CD14-positive monocyte (primary cell): ENCODE measurements at regions of chr2 and their contacts with region 1.

Region 1: DNA sequence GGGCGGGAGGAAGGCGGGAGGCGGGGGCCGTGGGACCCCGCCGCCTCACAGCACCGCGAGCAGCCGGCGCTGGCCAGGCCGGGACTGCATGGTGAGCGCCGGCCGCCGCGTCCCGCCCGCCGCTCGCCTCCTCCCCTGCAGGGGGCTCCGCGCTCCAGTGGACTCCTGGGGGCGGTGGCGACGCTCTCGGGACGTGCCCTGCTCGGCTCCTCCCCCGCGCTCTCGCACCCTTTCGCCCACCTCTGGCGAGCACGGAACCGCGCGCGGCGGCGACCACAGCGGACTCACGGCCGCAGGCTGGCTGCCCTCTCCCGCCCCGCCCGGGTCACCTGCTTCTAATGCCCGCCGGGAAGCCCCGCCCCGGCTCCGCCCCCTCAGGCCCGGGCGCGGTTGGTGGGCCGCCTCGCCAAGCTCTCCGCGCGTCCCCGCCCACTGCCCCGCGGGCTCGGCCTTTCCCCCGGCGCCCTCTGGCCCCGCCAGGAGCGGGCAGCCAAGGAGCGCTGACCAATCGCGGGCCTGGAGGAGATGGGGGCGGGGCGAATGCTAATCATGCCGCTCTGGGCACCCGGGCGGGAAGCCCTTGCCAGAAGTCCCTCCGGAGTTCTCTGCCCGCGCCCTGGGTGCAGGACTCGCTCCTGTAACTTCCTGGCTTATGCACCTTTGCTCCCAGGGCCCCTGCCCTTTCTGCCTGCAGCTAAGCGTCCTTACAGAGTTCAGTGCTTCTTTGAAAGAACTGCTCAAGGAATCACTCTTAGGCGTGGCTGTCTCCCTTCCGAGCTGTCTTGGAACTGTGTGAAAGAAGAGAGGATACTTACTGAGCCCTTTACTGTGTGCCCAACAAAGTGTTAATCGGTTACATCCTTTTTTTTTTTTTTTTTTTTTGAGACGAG is at the start of gene FZD5:
- DNase-seq: peak; percentile 94 to 97 (median 95)
- H3K4me3 ChIP-seq: peak within 1 kb of the TSS; percentile 50 to 85 (median 79)
- H3K4me3 Mint-ChIP-seq: peak within 1 kb of the TSS; percentile 91 to 96
- H3K27ac ChIP-seq: peak within 1 kb of the TSS; percentile 37 to 62
- H3K27ac Mint-ChIP-seq: peak within 1 kb of the TSS; percentile 69 to 91 (median 84)
- H3K4me1 ChIP-seq: peaks cover 45% of the 10 kb centered on the region in 2 donors
- H3K4me1 Mint-ChIP-seq: peaks cover 47% of the 10 kb centered on the region
- H3K27me3 ChIP-seq: peaks cover 0 to 12% of the 10 kb centered on the region in 2 donors
- H3K27me3 Mint-ChIP-seq: peaks cover 7 to 27% (median 26%) of the 10 kb centered on the region in 3 donors
- CTCF ChIP-seq: peak; percentile 73
- polyA plus RNA-seq, gene FZD5: 0.32 to 0.55 (median 0.48) TPM

Region 2: GRCh38 chr2:207694811-207695281 is 75.0 kb before region 1 on chr2:
- intact Hi-C with region 1: no loop called
- DNase-seq: no peak
- H3K4me3 ChIP-seq: no peak overlapping the region
- H3K4me3 Mint-ChIP-seq: no peak overlapping the region
- H3K27ac ChIP-seq: no peak overlapping the region
- H3K27ac Mint-ChIP-seq: no peak overlapping the region
- H3K4me1 ChIP-seq: peaks cover 38 to 42% of the 10 kb centered on the region in 2 donors
- H3K4me1 Mint-ChIP-seq: peaks cover 63% of the 10 kb centered on the region
- H3K27me3 ChIP-seq: no peaks in the 10 kb centered on the region
- H3K27me3 Mint-ChIP-seq: peaks cover 0 to 2% (median 0%) of the 10 kb centered on the region in 3 donors
- CTCF ChIP-seq: no peak

Region 3: DNA sequence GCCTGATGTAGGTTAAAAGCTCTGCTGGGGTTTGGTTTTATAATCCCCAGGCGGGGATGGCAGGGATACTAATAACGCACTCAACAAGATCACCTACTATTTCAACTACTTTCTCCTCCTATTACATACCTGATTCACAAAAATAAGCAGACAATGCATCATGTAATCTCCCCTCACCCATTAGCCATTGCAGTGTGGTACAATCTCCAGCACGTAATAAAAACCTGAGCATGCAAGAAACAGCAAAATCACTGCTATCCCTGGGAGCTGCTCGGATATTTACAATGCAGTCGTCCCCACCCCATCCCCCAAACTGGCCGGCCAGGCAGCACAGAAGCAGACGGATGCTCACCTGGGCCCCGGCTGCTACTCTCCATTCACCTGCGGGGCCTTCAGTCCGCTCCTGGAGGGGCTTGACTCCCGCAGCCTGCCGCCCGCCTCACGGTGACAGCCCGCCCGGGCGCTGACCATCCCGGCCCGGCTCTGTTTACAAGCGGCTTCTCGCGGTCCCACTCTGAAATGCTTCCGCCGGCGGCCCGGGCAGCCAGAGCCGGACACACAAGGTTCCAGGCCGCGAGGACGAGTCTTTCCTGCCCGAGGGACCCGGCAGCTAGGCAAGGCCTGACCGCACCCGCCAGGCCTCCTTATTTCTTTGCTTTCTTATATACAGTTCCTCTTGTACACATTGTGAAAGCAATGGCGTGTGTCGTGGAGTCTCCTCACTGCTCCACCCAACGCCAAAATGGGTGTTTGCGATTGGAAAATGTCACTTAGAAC is 255.4 kb after region 1 on chr2 and contains the start of gene PLEKHM3:
- intact Hi-C with region 1: loop called (anchors 5 to 10 kb)
- DNase-seq: peak; percentile 85 to 89 (median 89)
- H3K4me3 ChIP-seq: peak within 1 kb of the TSS; percentile 87 to 91 (median 89)
- H3K4me3 Mint-ChIP-seq: peak within 1 kb of the TSS; percentile 77 to 99
- H3K27ac ChIP-seq: peak within 1 kb of the TSS; percentile 89 to 95
- H3K27ac Mint-ChIP-seq: peak within 1 kb of the TSS; percentile 91 to 97 (median 95)
- H3K4me1 ChIP-seq: peaks cover 20 to 22% of the 10 kb centered on the region in 2 donors
- H3K4me1 Mint-ChIP-seq: peaks cover 15% of the 10 kb centered on the region
- H3K27me3 ChIP-seq: no peaks in the 10 kb centered on the region
- H3K27me3 Mint-ChIP-seq: peaks cover 0 to 2% (median 0%) of the 10 kb centered on the region in 3 donors
- CTCF ChIP-seq: no peak
- polyA plus RNA-seq, gene PLEKHM3: 3.0 to 8.0 (median 3.0) TPM

Region 4: GRCh38 chr2:208033758-208034502 is 264.1 kb after region 1 on chr2:
- intact Hi-C with region 1: loop called (anchors 5 to 10 kb)
- DNase-seq: no peak
- H3K4me3 ChIP-seq: no peak overlapping the region
- H3K4me3 Mint-ChIP-seq: no peak overlapping the region
- H3K27ac ChIP-seq: no peak overlapping the region
- H3K27ac Mint-ChIP-seq: no peak overlapping the region
- H3K4me1 ChIP-seq: peaks cover 15 to 19% of the 10 kb centered on the region in 2 donors
- H3K4me1 Mint-ChIP-seq: peaks cover 20% of the 10 kb centered on the region
- H3K27me3 ChIP-seq: no peaks in the 10 kb centered on the region
- H3K27me3 Mint-ChIP-seq: peaks cover 0 to 2% (median 0%) of the 10 kb centered on the region in 3 donors
- CTCF ChIP-seq: no peak

Region 5: GRCh38 chr2:208407667-208408066 is 637.8 kb after region 1 on chr2:
- intact Hi-C with region 1: no loop called
- DNase-seq: no peak
- H3K4me3 ChIP-seq: no peak overlapping the region
- H3K4me3 Mint-ChIP-seq: peak overlapping the region in 1 of 2 donors; percentile 78
- H3K27ac ChIP-seq: no peak overlapping the region
- H3K27ac Mint-ChIP-seq: no peak overlapping the region
- H3K4me1 ChIP-seq: no peaks in the 10 kb centered on the region
- H3K4me1 Mint-ChIP-seq: peaks cover 6% of the 10 kb centered on the region
- H3K27me3 ChIP-seq: peaks cover 58 to 70% of the 10 kb centered on the region in 2 donors
- H3K27me3 Mint-ChIP-seq: peaks cover 41 to 57% (median 44%) of the 10 kb centered on the region in 3 donors
- CTCF ChIP-seq: no peak